ENCODE measurements at regions of chrX and their contacts with region 1.

Region 1: GRCh38 chrX:34585561-34585960 is 71.5 kb downstream of the TMEM47 start:
- DNase-seq: peak; percentile 88
- H3K4me3 ChIP-seq: peak overlapping the region in 1 of 3 experiments; percentile 23
- H3K27ac ChIP-seq: peak overlapping the region; percentile 87
- H3K4me1 ChIP-seq: peaks cover 30% of the 10 kb centered on the region
- H3K27me3 ChIP-seq: no peaks in the 10 kb centered on the region
- CTCF ChIP-seq: no peak
- POLR2A ChIP-seq: no peak

Region 2: DNA sequence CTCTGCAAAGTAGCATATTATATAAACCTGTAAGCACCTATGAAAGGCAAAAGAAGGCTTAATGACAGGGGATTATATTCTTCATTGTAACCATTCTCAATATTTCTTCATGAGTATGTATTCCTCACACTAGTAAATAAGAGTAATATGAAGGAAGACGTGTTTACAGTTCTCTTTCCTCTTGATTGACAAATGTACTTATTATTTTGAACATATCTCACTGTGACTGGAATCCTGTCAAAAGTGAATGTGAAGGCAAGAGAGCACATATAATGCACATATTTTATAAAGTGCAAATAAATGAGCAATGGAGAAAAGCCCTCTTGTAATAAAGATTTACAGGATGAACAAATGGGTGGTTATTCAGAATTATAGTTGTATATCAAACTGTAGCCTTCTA is 473.1 kb before region 1 on chrX:
- CTCF ChIA-PET with region 1: no interaction called
- POLR2A ChIA-PET with region 1: no interaction called
- dilution Hi-C with region 1: no loop called
- intact Hi-C with region 1: no loop called
- DNase-seq: no peak
- H3K4me3 ChIP-seq: no peak overlapping the region
- H3K27ac ChIP-seq: no peak overlapping the region
- H3K4me1 ChIP-seq: no peaks in the 10 kb centered on the region
- H3K27me3 ChIP-seq: no peaks in the 10 kb centered on the region
- CTCF ChIP-seq: no peak
- POLR2A ChIP-seq: no peak

Region 3: DNA sequence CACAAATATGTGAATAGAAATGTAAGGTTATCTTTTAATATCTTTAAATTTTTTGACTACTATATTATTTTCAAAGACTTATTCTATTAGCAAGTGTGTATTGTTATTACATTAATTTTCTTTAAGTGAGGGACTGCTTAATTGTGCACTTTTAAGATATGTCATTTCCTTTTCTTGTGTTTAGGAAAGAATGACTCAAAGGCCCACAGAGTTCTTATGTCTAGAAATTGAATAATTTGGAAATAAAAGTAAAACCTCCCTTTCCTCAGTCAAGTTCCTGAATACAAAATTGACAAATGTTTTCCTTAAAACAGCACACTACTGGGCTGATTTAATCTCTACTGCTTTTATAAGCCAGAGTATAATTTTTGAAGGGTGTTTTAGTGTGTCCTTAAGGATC is 98.2 kb before region 1 on chrX:
- CTCF ChIA-PET with region 1: no interaction called
- POLR2A ChIA-PET with region 1: no interaction called
- dilution Hi-C with region 1: no loop called
- intact Hi-C with region 1: loop called (anchors 1 kb)
- DNase-seq: peak; percentile 74
- H3K4me3 ChIP-seq: peak overlapping the region in 1 of 3 experiments; percentile 17
- H3K27ac ChIP-seq: peak overlapping the region; percentile 72
- H3K4me1 ChIP-seq: peaks cover 15% of the 10 kb centered on the region
- H3K27me3 ChIP-seq: no peaks in the 10 kb centered on the region
- CTCF ChIP-seq: no peak
- POLR2A ChIP-seq: no peak

Region 4: DNA sequence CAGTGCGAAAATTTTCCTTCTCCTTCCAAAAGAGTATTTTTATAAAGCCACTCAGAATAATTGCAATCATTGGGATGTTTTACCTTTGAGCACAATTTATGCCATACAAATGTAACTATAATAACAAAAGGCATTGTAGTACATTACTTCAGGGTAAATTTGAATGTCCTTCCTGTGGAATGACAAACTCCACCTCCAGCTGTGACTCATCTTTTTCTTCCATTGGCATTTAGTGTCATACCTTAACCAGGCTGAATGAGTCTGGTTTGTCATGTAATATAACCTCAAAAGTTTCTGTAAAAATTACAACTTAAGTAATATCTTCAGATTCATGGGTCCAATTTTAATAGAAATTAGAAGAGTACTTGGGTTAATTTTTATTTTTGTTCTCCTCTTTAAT is 21.8 kb before region 1 on chrX:
- CTCF ChIA-PET with region 1: no interaction called
- POLR2A ChIA-PET with region 1: no interaction called
- dilution Hi-C with region 1: no loop called
- intact Hi-C with region 1: loop called (anchors 2 kb)
- DNase-seq: no peak
- H3K4me3 ChIP-seq: no peak overlapping the region
- H3K27ac ChIP-seq: no peak overlapping the region
- H3K4me1 ChIP-seq: peaks cover 25% of the 10 kb centered on the region
- H3K27me3 ChIP-seq: no peaks in the 10 kb centered on the region
- CTCF ChIP-seq: no peak
- POLR2A ChIP-seq: no peak

Region 5: GRCh38 chrX:34631821-34632220 is 46.3 kb after region 1 on chrX:
- CTCF ChIA-PET with region 1: no interaction called
- POLR2A ChIA-PET with region 1: no interaction called
- dilution Hi-C with region 1: no loop called
- intact Hi-C with region 1: loop called (anchors 5 kb)
- DNase-seq: peak; percentile 69
- H3K4me3 ChIP-seq: no peak overlapping the region
- H3K27ac ChIP-seq: peak overlapping the region; percentile 29
- H3K4me1 ChIP-seq: peaks cover 11% of the 10 kb centered on the region
- H3K27me3 ChIP-seq: no peaks in the 10 kb centered on the region
- CTCF ChIP-seq: no peak
- POLR2A ChIP-seq: no peak

Region 6: GRCh38 chrX:34656842-34657725 is 71.5 kb after region 1 on chrX and contains the start of gene TMEM47:
- CTCF ChIA-PET with region 1: interaction called, 3 read pairs
- POLR2A ChIA-PET with region 1: interaction called, 6 read pairs
- dilution Hi-C with region 1: no loop called
- intact Hi-C with region 1: loop called (anchors 1 kb)
- DNase-seq: peak; percentile 83
- H3K4me3 ChIP-seq: peak within 1 kb of the TSS; percentile 59 to 95 (median 91)
- H3K27ac ChIP-seq: peak within 1 kb of the TSS; percentile 74
- H3K4me1 ChIP-seq: peaks cover 13% of the 10 kb centered on the region
- H3K27me3 ChIP-seq: no peaks in the 10 kb centered on the region
- CTCF ChIP-seq: peak in 1 of 2 donors; percentile 5
- POLR2A ChIP-seq: peak; percentile 74
- total RNA-seq, gene TMEM47: 22.2 and 26.8 TPM in 2 replicates

Region 7: DNA sequence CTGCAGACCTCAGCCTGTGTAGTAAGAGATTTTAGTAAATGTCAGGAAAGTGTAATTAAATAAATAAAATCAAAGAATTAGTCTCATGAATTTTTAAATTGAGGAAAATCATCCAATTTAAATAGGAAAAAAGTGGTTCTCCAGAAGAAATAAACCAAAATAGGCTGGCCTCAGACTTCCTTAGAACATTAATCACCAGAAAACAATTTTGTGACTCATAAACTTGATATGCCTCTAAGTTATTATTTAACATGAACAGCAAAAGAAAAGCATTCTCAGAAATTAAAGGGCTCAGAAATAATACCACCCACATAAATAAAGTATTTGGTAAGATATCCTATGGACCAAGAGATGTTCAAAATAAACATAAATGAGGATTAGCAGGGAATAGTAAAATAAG is 371.4 kb after region 1 on chrX:
- CTCF ChIA-PET with region 1: no interaction called
- POLR2A ChIA-PET with region 1: no interaction called
- dilution Hi-C with region 1: no loop called
- intact Hi-C with region 1: loop called (anchors 2 kb)
- DNase-seq: peak; percentile 51
- H3K4me3 ChIP-seq: no peak overlapping the region
- H3K27ac ChIP-seq: peak overlapping the region; percentile 48
- H3K4me1 ChIP-seq: peaks cover 10% of the 10 kb centered on the region
- H3K27me3 ChIP-seq: no peaks in the 10 kb centered on the region
- CTCF ChIP-seq: no peak
- POLR2A ChIP-seq: no peak